ENCODE measurements at regions of chr19 and their contacts with region 1.

Region 1: GRCh38 chr19:14366498-14366915 is 14.7 kb upstream of the ADGRE5 start:
- DNase-seq: peak; percentile 89
- ATAC-seq: peak; percentile 65
- H3K4me3 Mint-ChIP-seq: no peak overlapping the region
- H3K27ac Mint-ChIP-seq: no peak overlapping the region
- H3K4me1 Mint-ChIP-seq: peaks cover 24% of the 10 kb centered on the region
- H3K27me3 Mint-ChIP-seq: no peaks in the 10 kb centered on the region; the same call in 1 of the 2 replicates
- CTCF ChIP-seq: no peak

Region 2: GRCh38 chr19:14383661-14384555 is 17.4 kb after region 1 on chr19:
- CTCF ChIA-PET with region 1: interaction called, 24 read pairs
- POLR2A ChIA-PET with region 1: interaction called, 3 read pairs
- DNase-seq: no peak
- ATAC-seq: no peak
- H3K4me3 Mint-ChIP-seq: no peak overlapping the region
- H3K27ac Mint-ChIP-seq: no peak overlapping the region
- H3K4me1 Mint-ChIP-seq: peaks cover 30% of the 10 kb centered on the region
- H3K27me3 Mint-ChIP-seq: peaks cover 6% of the 10 kb centered on the region
- CTCF ChIP-seq: no peak

Region 3: GRCh38 chr19:14394167-14394566 is 27.7 kb after region 1 on chr19:
- CTCF ChIA-PET with region 1: interaction called, 17 read pairs
- POLR2A ChIA-PET with region 1: no interaction called
- DNase-seq: no peak
- ATAC-seq: no peak
- H3K4me3 Mint-ChIP-seq: no peak overlapping the region
- H3K27ac Mint-ChIP-seq: no peak overlapping the region
- H3K4me1 Mint-ChIP-seq: peaks cover 9% of the 10 kb centered on the region
- H3K27me3 Mint-ChIP-seq: no peaks in the 10 kb centered on the region
- CTCF ChIP-seq: no peak